HepG2 (cell line): ENCODE measurements at regions of chr15 and their contacts with region 1.

Region 1: DNA sequence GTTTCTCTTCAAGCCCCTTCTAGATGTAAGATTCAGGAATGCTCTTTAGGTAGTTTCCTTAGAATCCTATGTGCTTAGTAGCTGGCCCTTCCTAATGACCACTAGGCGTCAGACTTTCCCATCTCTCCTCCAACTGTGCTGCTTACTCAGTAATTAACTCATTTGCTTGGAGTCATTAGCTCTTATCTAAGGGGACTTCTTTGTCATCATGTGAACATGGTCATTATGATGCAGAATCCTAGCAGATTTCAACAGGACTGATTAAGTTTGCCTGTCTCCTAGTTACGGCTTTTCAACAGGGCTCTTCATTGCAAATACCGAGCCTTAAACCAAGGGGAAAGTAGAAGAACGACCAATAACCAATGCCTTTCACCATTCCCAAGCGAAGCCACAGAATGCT is 46.4 kb downstream of the GJD2 start:
- DNase-seq: peak; percentile 28
- ATAC-seq: peak; percentile 87
- H3K4me3 ChIP-seq: no peak overlapping the region
- H3K27ac ChIP-seq: no peak overlapping the region
- H3K4me1 ChIP-seq: no peaks in the 10 kb centered on the region
- H3K27me3 ChIP-seq: peaks cover 0 to 7% of the 10 kb centered on the region in 2 experiments; a peak in 1 of 5 replicates
- CTCF ChIP-seq: peak; percentile 77
- EP300 ChIP-seq: no peak
- POLR2A ChIP-seq: no peak
- RAD21 ChIP-seq: 0 out of 2 replicates have a peak, but pooled peaks have one; percentile 13

Region 2: GRCh38 chr15:34927726-34928125 is 219.3 kb after region 1 on chr15:
- CTCF ChIA-PET with region 1: no interaction called
- POLR2A ChIA-PET with region 1: no interaction called
- in situ Hi-C with region 1: loop called (anchors 5 kb)
- intact Hi-C with region 1: no loop called
- DNase-seq: no peak
- ATAC-seq: no peak
- H3K4me3 ChIP-seq: no peak overlapping the region
- H3K27ac ChIP-seq: no peak overlapping the region
- H3K4me1 ChIP-seq: no peaks in the 10 kb centered on the region
- H3K27me3 ChIP-seq: no peaks in the 10 kb centered on the region
- CTCF ChIP-seq: no peak
- EP300 ChIP-seq: no peak
- POLR2A ChIP-seq: no peak
- RAD21 ChIP-seq: no peak